ENCODE measurements at regions of chr17 and their contacts with region 1.

Region 1: DNA sequence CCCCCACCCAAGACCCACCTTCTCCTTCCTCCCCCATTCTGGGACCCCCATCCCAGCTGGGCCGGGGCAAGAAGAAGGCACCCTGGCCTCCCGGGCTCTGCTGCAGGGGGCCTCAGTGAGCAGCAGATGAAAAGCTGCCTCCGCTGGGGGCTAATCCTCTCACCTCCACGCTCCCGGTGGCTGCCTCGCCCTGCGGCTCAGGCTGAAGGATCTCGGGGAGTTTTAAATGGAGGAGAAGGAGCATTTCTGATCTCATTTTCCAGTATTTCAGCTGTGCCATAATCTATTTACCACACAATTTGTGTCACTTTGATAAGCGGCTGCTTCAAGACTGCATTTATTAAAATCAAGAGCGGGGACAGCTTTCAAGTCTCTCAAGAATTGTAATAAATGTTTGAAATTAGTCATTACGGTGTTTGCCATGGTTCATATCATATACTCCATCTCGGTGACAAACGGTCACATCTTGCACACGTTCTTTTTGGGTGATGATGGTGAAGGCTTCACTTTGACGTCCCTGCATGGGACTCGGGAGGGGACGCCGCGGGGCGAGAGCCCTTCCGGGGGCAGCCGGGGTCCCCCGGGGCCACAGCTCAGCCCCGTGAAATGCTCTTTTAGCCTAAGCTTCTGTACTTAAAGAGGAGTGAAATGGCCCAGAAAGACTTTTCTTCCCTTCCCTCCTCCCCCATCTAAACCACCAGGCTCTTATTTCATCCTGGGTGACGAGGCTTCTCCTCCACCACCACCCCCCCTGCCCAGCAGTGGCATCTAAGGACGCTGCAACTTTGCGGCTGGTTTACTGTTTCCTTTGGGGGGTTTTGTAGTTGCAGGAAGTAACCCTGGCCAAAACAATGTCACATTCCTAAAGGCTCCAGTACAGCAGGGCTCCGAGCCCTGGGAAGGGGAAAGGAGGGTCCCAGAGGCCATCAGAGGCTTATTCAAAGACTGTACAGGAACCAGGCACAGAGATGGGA is 313.1 kb upstream of the TNRC6C start:
- DNase-seq: peak; percentile 63
- ATAC-seq: peak; percentile 77
- H3K4me3 Mint-ChIP-seq: peak overlapping the region; percentile 73
- H3K27ac Mint-ChIP-seq: peak overlapping the region; percentile 93
- H3K4me1 Mint-ChIP-seq: peaks cover 24% of the 10 kb centered on the region
- H3K27me3 Mint-ChIP-seq: peaks cover 17% of the 10 kb centered on the region

Region 2: DNA sequence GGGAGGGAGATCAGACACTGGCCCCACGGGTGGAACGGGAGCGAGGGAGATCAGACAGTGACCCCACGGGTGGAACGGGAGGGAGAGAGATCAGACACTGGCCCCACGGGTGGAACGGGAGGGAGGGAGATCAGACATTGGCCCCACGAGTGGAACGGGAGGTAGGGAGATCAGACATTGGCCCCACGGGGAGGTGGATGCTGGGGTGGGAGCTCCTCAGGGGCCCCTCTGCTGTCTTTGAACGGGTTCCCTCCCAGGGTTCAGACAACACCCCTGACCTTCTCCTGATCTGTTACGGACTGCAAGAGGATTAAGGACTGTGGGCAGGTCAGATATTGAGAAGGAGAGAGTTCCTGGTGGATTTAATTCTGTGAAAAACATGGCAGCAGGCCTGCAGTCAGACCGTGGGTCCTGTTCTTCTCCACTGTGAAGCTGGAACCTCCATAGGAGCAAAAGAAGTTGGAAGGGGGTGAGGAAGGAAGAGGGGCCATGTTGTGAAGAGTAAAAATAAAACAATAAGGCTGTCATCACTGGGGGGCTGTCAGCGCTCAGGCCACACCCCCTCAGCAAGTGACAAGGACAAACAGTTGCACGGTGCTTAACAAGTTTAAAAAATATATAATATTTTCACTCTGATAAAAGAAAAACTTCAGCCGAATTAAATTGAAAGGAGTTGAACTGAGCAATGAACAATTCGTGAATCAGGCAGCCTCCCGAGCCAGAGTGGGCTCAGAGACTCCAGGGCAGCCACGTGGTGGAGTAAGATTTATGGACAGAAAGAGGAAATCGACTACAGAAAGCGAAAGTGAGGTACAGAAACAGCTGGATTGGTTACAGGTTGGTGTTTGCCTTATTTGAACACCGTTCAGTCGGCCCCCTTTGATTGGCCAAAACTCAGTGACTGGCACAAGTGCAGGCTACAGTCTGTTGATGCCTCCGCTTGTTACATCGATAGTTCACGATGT is 35.5 kb before region 1 on chr17:
- POLR2A ChIA-PET with region 1: interaction called, 10 read pairs
- DNase-seq: peak; percentile 57
- ATAC-seq: peak; percentile 99
- H3K4me3 Mint-ChIP-seq: peak overlapping the region; percentile 80
- H3K27ac Mint-ChIP-seq: peak overlapping the region; percentile 94
- H3K4me1 Mint-ChIP-seq: peaks cover 17% of the 10 kb centered on the region
- H3K27me3 Mint-ChIP-seq: peaks cover 5% of the 10 kb centered on the region

Region 3: DNA sequence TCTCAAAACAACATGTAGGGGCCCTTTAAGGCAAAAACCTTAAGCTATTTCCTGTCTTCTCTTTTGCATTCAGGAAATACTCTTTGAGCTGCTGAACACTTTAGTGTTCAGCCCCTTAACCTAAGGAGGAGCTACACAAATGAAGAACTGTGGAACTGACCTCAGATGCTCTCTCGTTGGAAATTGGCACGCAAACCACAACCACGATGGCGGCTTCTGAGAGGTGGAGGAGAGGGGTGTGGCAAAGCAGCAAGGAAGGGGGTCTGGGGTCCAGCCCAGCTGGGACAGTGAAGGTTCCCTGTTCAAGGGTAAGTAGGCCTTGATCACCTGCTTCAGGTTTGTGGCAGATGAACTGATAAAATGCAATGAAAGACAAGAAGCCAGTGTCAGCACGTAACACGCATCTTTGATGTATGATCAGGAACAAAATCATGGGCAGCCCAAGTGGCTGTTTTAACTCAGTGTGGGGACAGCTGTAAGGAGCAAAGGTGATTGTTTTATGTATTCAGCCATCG is 21.6 kb after region 1 on chr17:
- POLR2A ChIA-PET with region 1: interaction called, 19 read pairs
- DNase-seq: peak; percentile 87
- ATAC-seq: peak; percentile 92
- H3K4me3 Mint-ChIP-seq: peak overlapping the region; percentile 92
- H3K27ac Mint-ChIP-seq: peak overlapping the region; percentile 95
- H3K4me1 Mint-ChIP-seq: peaks cover 40% of the 10 kb centered on the region
- H3K27me3 Mint-ChIP-seq: peaks cover 6% of the 10 kb centered on the region